ENCODE measurements at regions of chr19 and their contacts with region 1.

Region 1: GRCh38 chr19:12801466-12802266 is at the starts of genes PRDX2 and THSD8:
- DNase-seq: peak; percentile 90
- H3K4me3 ChIP-seq: peak within 1 kb of the TSS; percentile 64
- H3K27ac ChIP-seq: peak within 1 kb of the TSS; percentile 87
- H3K4me1 ChIP-seq: peaks cover 13% of the 10 kb centered on the region
- H3K27me3 ChIP-seq: no peaks in the 10 kb centered on the region
- CTCF ChIP-seq: no peak
- total RNA-seq, gene PRDX2: 406 and 429 TPM in 2 replicates
- total RNA-seq, gene THSD8: 45.2 and 53.4 TPM in 2 replicates

Region 2: DNA sequence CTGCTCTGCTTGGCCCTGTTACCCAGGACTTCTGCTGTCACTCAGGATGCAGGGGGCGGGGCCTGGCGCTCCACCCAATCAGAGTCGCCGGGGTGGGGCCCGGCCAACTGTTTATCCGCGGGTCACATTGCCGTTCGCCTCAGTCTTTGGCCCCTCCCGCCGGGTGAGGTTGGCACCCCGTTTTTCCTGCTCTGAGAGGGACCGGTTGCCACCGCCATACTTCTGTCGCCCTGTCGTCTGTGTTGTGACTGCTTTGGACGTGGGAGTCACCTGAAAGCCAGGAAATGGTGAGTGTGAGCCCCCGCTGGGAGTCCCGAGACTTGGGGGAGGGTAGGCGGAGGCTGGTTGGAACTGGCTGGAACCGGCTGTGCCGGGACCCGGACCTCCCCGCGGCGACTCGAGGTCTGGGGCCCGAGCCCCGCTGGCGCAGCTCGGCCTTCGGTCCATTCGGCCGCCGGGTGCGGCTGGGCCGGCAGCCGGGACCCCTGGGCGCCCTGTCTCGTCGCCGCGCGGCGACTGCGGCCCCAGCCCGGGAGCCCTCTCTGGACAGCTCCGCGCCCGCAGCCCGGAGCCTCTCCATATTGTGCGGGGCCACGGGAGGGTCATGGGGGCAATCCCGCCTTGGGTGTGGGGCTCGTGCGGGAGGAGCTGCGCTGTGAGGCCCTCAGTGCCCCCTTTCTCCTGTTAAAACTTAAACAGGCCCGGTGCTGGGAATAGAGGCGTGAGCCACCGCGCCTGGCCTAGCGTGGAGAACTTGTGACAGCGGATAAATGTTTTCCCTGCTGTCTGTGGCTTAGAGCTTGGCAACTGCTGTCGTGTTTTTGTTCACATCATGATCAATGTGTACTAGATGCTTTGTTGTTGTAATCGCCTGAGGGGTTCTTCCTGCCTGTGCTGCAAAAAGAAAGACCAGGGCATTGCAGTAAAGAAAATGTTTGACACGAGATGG is 736.8 kb before region 1 on chr19 and contains the start of gene ZNF844:
- CTCF ChIA-PET with region 1: no interaction called
- POLR2A ChIA-PET with region 1: no interaction called
- intact Hi-C with region 1: no loop called
- DNase-seq: peak; percentile 67
- H3K4me3 ChIP-seq: peak within 1 kb of the TSS; percentile 67
- H3K27ac ChIP-seq: no peak within 1 kb of the TSS
- H3K4me1 ChIP-seq: no peaks in the 10 kb centered on the region
- H3K27me3 ChIP-seq: no peaks in the 10 kb centered on the region
- CTCF ChIP-seq: no peak
- total RNA-seq, gene ZNF844: 1.5 TPM in 2 replicates

Region 3: DNA sequence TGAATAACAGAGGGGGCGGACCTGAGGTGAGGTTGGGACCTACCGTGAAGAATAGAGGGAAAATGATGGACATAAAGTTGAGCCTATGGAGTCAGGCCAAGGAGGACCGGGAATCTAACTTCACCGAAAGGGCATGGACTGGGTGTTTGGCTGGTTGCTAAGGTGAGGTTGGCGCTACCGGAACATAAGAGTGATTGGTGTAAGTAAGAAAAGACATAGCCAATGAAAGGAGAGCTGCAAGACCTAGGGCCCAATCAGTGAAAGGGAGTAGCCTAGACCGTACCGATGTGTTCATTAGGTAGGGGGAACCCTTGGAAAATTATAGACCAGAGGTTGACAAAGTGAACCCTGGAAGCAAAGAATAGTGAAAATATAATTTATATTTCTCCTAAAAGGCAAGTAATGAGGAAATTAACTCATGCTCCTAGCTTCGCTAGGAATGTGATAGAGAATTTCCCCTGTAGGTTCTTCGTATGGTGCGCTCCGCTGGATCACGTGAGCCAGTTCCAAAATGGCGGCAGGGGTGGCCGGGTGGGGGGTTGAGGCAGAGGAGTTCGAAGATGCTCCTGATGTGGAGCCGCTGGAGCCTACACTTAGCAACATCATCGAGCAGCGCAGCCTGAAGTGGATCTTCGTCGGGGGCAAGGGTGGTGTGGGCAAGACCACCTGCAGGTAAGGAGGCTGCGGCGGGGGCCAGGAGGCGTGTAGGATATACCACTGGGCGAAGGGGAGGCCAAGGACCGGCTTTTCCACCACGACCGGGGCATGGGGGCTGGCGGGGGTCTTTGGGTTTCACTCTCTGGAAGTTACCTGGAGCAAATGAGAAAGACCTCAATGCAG is 64.5 kb before region 1 on chr19 and contains the start of gene GET3:
- CTCF ChIA-PET with region 1: no interaction called
- POLR2A ChIA-PET with region 1: interaction called, 6 read pairs
- intact Hi-C with region 1: loop called (anchors 2 kb)
- DNase-seq: peak; percentile 99
- H3K4me3 ChIP-seq: peak within 1 kb of the TSS; percentile 69
- H3K27ac ChIP-seq: peak within 1 kb of the TSS; percentile 98
- H3K4me1 ChIP-seq: peaks cover 21% of the 10 kb centered on the region
- H3K27me3 ChIP-seq: no peaks in the 10 kb centered on the region
- CTCF ChIP-seq: no peak
- total RNA-seq, gene GET3: 91.7 and 92.6 TPM in 2 replicates

Region 4: DNA sequence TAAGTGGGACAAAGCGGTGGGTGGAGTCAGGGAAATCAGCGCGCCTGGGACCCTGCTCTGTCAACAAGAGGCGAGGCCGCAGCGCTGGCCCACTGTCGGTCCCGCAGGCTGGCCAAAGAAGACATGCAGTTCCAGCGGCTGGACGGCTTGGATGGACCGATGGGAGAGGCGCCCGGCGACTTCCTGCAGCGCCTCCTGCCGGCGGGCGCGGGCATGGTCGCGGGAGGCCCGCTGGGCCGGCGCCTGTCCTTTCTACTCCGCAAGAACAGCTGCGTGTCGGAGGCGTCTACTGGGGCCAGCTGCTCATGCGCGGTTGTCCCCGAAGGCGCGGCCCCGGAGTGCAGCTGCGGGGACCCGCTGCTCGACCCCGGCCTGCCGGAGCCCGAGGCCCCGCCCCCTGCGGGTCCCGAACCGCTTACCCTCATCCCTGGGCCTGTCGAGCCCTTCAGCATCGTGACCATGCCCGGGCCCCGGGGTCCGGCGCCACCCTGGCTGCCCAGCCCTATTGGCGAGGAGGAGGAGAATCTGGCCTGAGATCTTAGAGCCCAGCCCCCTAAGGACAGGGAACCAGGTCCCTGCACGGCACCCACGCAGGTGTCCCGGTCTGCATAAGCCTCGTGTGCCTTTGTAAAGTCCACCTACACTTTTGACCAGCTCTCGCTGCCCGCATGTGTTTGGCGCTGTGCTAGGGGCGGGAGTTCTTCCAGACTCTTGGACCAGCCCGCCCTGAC is 44.0 kb before region 1 on chr19:
- CTCF ChIA-PET with region 1: interaction called, 10 read pairs
- POLR2A ChIA-PET with region 1: no interaction called
- intact Hi-C with region 1: no loop called
- DNase-seq: peak; percentile 83
- H3K4me3 ChIP-seq: peak overlapping the region; percentile 36
- H3K27ac ChIP-seq: no peak overlapping the region
- H3K4me1 ChIP-seq: no peaks in the 10 kb centered on the region
- H3K27me3 ChIP-seq: no peaks in the 10 kb centered on the region
- CTCF ChIP-seq: peak; percentile 95

Region 5: GRCh38 chr19:12815088-12815487 is 13.4 kb after region 1 on chr19:
- CTCF ChIA-PET with region 1: no interaction called
- POLR2A ChIA-PET with region 1: no interaction called
- intact Hi-C with region 1: no loop called
- DNase-seq: no peak
- H3K4me3 ChIP-seq: no peak overlapping the region
- H3K27ac ChIP-seq: no peak overlapping the region
- H3K4me1 ChIP-seq: no peaks in the 10 kb centered on the region
- H3K27me3 ChIP-seq: no peaks in the 10 kb centered on the region
- CTCF ChIP-seq: no peak

Region 6: DNA sequence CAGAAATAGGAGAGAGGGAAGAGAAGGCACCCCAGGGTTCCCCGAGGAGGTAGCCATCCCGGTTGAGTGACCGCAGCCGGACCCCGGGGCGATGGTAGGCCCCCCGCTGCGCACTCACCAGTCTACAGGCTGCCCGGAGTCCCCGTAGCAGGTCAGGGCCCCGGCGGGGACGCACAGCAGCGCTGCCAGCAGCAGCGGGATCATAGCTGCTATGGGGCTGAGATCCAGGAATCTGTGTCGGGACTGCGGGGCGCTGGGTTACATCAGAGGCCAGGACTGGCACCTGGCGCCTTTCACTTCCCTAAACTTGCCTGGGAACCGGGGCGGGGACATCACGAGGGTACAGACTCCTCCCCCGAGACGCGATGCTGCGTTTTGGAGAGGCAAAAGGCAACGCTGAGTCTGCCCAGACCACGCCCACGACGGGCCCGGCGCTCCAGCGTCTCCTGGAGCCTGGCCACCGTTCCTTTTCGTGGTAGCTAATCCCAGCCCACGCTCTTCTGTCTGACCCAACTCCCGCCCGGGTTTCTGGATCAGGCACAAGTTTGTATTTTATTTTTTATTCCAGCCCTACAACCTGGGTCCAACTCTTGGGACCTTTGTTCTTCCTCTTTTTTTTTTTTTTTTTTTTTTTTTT is 79.6 kb after region 1 on chr19 and contains the start of gene DNASE2:
- CTCF ChIA-PET with region 1: no interaction called
- POLR2A ChIA-PET with region 1: no interaction called
- intact Hi-C with region 1: no loop called
- DNase-seq: peak; percentile 98
- H3K4me3 ChIP-seq: peak within 1 kb of the TSS; percentile 82
- H3K27ac ChIP-seq: peak within 1 kb of the TSS; percentile 81
- H3K4me1 ChIP-seq: peaks cover 5% of the 10 kb centered on the region
- H3K27me3 ChIP-seq: no peaks in the 10 kb centered on the region
- CTCF ChIP-seq: no peak
- total RNA-seq, gene DNASE2: 22.7 and 27.8 TPM in 2 replicates